ENCODE measurements at regions of chr19 and their contacts with region 1.

Region 1: DNA sequence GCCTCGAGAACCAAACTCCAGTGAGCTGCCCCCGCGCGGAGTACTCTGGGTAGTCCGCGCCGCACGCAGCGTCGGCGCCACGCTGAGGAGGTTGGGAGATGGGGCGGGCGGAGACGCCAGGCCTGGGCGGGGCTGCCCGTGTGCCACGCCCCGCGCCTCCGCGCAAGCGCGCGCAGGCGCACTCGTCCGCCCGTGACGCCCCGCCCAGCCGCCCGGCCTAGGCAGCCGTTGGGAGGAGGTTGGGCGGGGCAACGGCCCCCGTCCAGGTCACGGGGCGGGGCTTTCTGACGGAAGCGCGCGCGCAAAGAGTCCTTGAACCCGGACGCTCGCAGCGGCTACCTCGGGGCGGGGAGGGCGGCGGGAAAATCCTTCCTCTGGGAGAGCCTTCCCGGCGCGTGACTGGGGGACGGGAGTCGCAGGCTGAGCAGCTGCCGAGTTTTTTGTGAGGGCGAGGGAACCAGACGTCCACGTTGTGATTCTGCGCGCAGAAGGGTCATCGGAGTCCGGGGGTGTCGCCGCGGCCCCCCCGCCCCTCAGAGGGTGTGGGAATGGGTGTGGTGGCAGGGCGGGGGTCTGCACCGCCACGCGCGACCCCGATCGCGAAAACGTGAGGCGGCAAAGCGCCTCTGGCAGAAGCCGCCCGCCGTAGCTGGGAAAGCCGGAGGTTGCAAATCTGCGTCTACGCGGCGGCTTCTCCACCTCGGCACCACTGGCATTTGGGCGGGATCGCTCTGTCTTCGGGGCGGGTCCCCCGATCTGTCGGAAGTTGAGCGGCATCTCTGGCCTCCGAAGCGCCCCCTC is at the start of gene MED26:
- DNase-seq: peak; percentile 90 to 98 (median 96)
- ATAC-seq: peak; percentile 88
- H3K4me3 ChIP-seq: peak within 1 kb of the TSS; percentile 99
- H3K4me3 Mint-ChIP-seq: peak within 1 kb of the TSS; percentile 99
- H3K27ac ChIP-seq: peak within 1 kb of the TSS; percentile 94 to 98
- H3K27ac Mint-ChIP-seq: peak within 1 kb of the TSS; percentile 96
- H3K4me1 ChIP-seq: peaks cover 43% of the 10 kb centered on the region
- H3K4me1 Mint-ChIP-seq: peaks cover 50% of the 10 kb centered on the region
- H3K27me3 ChIP-seq: no peaks in the 10 kb centered on the region
- H3K27me3 Mint-ChIP-seq: no peaks in the 10 kb centered on the region
- CTCF ChIP-seq: no peak
- total RNA-seq, gene MED26: 50.4 to 52.4 TPM

Region 2: GRCh38 chr19:16470911-16471811 is 157.2 kb before region 1 on chr19:
- CTCF ChIA-PET with region 1: no interaction called
- POLR2A ChIA-PET with region 1: no interaction called
- intact Hi-C with region 1: loop called in 1 of 2 experiments (anchors 1 kb)
- DNase-seq: peak in 9 of 14 experiments; percentile 5 to 51 (median 22)
- ATAC-seq: peak; percentile 12
- H3K4me3 ChIP-seq: peak overlapping the region; percentile 74
- H3K4me3 Mint-ChIP-seq: peak overlapping the region; percentile 91
- H3K27ac ChIP-seq: no peak overlapping the region
- H3K27ac Mint-ChIP-seq: peak overlapping the region; percentile 73
- H3K4me1 ChIP-seq: peaks cover 38% of the 10 kb centered on the region
- H3K4me1 Mint-ChIP-seq: peaks cover 39% of the 10 kb centered on the region
- H3K27me3 ChIP-seq: no peaks in the 10 kb centered on the region
- H3K27me3 Mint-ChIP-seq: no peaks in the 10 kb centered on the region
- CTCF ChIP-seq: no peak

Region 3: GRCh38 chr19:16542045-16542909 is 86.1 kb before region 1 on chr19 and contains the start of gene CHERP:
- CTCF ChIA-PET with region 1: no interaction called
- POLR2A ChIA-PET with region 1: interaction called, 9 read pairs
- intact Hi-C with region 1: loop called (anchors 1 kb)
- DNase-seq: peak; percentile 88 to 98 (median 94)
- ATAC-seq: peak; percentile 87
- H3K4me3 ChIP-seq: peak within 1 kb of the TSS; percentile 95
- H3K4me3 Mint-ChIP-seq: peak within 1 kb of the TSS; percentile 97
- H3K27ac ChIP-seq: peak within 1 kb of the TSS; percentile 75 to 79
- H3K27ac Mint-ChIP-seq: peak within 1 kb of the TSS; percentile 84
- H3K4me1 ChIP-seq: peaks cover 71% of the 10 kb centered on the region
- H3K4me1 Mint-ChIP-seq: peaks cover 47% of the 10 kb centered on the region
- H3K27me3 ChIP-seq: no peaks in the 10 kb centered on the region
- H3K27me3 Mint-ChIP-seq: no peaks in the 10 kb centered on the region
- CTCF ChIP-seq: no peak
- total RNA-seq, gene CHERP: 47.1 to 48.2 TPM

Region 4: GRCh38 chr19:16572332-16573211 is 55.8 kb before region 1 on chr19 and contains the start of gene SLC35E1:
- CTCF ChIA-PET with region 1: no interaction called
- POLR2A ChIA-PET with region 1: interaction called, 16 read pairs
- intact Hi-C with region 1: loop called in 1 of 2 experiments (anchors 1 kb)
- DNase-seq: peak; percentile 82 to 96 (median 88)
- ATAC-seq: peak; percentile 90
- H3K4me3 ChIP-seq: peak within 1 kb of the TSS; percentile 100
- H3K4me3 Mint-ChIP-seq: peak within 1 kb of the TSS; percentile 91
- H3K27ac ChIP-seq: peak within 1 kb of the TSS; percentile 89 to 97
- H3K27ac Mint-ChIP-seq: peak within 1 kb of the TSS; percentile 90
- H3K4me1 ChIP-seq: peaks cover 72% of the 10 kb centered on the region
- H3K4me1 Mint-ChIP-seq: peaks cover 60% of the 10 kb centered on the region
- H3K27me3 ChIP-seq: no peaks in the 10 kb centered on the region
- H3K27me3 Mint-ChIP-seq: no peaks in the 10 kb centered on the region
- CTCF ChIP-seq: no peak
- total RNA-seq, gene SLC35E1: 72.3 to 76.3 TPM

Region 5: GRCh38 chr19:16659831-16660708 is 31.7 kb after region 1 on chr19 and contains the start of gene SMIM7:
- CTCF ChIA-PET with region 1: interaction called, 6 read pairs
- POLR2A ChIA-PET with region 1: interaction called, 25 read pairs
- intact Hi-C with region 1: loop called (anchors 1 kb)
- DNase-seq: peak; percentile 97 to 100 (median 98)
- ATAC-seq: peak; percentile 96
- H3K4me3 ChIP-seq: peak within 1 kb of the TSS; percentile 92
- H3K4me3 Mint-ChIP-seq: peak within 1 kb of the TSS; percentile 100
- H3K27ac ChIP-seq: peak within 1 kb of the TSS; percentile 75 to 93
- H3K27ac Mint-ChIP-seq: peak within 1 kb of the TSS; percentile 98
- H3K4me1 ChIP-seq: peaks cover 51% of the 10 kb centered on the region
- H3K4me1 Mint-ChIP-seq: peaks cover 50% of the 10 kb centered on the region
- H3K27me3 ChIP-seq: no peaks in the 10 kb centered on the region
- H3K27me3 Mint-ChIP-seq: no peaks in the 10 kb centered on the region
- CTCF ChIP-seq: no peak
- total RNA-seq, gene SMIM7: 44.3 to 47.4 TPM